ENCODE measurements at regions of chr1 and their contacts with region 1.

Region 1: GRCh38 chr1:67561704-67562113 is 123.3 kb upstream of the GADD45A start:
- DNase-seq: peak; percentile 95
- ATAC-seq: peak; percentile 98
- H3K4me3 Mint-ChIP-seq: no peak overlapping the region
- H3K27ac Mint-ChIP-seq: no peak overlapping the region
- H3K4me1 Mint-ChIP-seq: peaks cover 4% of the 10 kb centered on the region
- H3K27me3 Mint-ChIP-seq: peaks cover 4% of the 10 kb centered on the region
- CTCF ChIP-seq: peak; percentile 88

Region 2: DNA sequence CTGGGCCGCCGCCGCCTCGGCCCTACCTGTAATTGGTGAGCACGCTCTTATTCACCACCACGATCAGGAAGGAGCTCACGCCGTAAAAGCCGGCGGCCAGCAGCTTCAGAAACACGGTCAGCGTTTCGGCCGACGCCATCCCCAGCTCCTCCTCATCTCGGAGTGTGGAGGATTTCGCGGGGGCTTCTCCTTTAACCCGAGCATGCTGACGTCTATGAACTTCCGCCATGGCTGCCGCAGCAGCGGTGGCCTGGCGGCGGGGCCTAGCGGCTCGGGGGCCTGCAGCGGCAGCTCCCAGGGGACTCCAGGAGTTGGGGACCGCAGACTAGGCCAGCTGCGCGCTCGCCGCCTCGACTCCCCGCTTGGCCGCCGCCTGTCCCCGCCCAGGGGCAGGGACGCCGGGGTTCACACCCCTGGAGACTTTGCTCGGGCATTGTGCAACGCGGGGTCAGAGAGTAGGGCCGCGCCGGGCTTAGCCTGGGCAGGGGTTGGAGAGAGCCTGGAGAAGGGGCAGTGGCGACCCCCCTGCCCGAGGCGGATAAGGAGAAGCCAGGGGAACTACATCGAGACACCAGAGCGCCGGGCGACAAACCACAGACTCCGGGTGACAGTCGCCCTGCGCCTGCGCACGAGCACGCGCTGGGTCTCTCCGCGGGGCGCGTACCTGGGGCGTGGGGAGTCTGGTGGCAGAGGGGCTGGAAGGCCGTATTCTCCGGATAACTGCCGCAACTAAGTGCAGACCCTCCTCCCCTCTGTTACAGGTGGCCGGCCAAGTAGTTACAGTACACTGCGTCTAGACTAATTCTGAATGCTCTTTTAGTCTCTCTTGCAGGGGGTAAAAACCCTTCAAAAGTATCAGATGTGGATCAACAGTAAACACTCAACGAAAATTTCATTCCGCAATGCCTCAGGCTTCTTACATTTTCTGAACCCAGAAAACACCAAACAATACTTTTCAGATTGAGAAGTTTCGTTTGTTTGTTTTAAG is 507.6 kb before region 1 on chr1 and contains the start of gene SLC35D1:
- CTCF ChIA-PET with region 1: no interaction called
- POLR2A ChIA-PET with region 1: no interaction called
- intact Hi-C with region 1: no loop called
- DNase-seq: peak; percentile 79
- ATAC-seq: peak; percentile 78
- H3K4me3 Mint-ChIP-seq: peak within 1 kb of the TSS; percentile 84
- H3K27ac Mint-ChIP-seq: peak within 1 kb of the TSS; percentile 94
- H3K4me1 Mint-ChIP-seq: peaks cover 22% of the 10 kb centered on the region
- H3K27me3 Mint-ChIP-seq: no peaks in the 10 kb centered on the region
- CTCF ChIP-seq: no peak
- total RNA-seq, gene SLC35D1: 8.3 to 8.4 TPM

Region 3: DNA sequence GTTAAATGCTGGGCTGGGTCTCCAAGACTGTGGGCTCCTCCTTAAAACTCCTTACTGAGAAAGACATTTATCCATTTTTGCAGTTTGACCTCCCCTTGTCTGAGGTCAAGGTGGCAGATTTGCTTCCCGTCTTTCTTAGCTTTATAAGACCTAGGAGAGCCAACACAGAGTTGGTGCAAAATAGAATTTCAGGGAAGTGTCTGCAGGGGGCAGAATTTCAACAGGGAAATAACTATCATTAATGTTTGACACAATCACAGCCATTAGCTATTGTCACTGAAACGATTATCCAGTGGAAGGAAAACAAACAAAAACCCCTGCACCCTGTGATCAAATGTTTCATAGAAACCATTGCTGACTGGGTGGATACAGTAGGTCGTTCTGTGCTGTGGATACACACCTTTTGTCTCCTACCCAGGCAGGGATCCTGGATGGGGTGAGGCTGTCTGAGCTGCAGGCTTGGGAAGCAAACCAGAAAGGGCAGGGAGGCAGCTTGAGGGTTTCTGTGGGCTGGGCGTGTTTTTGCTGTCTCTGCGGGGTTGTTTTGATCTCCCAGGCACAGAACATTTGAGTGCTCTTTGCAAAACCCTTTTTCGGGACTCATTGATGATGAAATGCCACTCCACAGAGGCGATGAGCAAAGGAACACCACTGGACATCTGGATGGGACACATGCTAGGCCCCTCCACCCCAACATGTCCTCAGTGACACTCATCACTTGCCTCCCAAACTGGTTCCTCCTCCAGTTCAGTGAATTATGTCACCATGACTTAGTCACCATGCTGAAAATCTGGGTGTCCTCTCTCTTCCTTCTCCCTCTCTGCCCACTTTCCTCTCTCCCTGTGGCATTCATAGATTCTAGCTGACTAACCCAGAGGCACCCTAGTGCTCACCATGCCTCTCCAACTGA is 37.3 kb before region 1 on chr1:
- CTCF ChIA-PET with region 1: interaction called, 14 read pairs
- POLR2A ChIA-PET with region 1: no interaction called
- intact Hi-C with region 1: no loop called
- DNase-seq: no peak
- ATAC-seq: no peak
- H3K4me3 Mint-ChIP-seq: no peak overlapping the region
- H3K27ac Mint-ChIP-seq: no peak overlapping the region
- H3K4me1 Mint-ChIP-seq: no peaks in the 10 kb centered on the region
- H3K27me3 Mint-ChIP-seq: peaks cover 6% of the 10 kb centered on the region
- CTCF ChIP-seq: no peak

Region 4: DNA sequence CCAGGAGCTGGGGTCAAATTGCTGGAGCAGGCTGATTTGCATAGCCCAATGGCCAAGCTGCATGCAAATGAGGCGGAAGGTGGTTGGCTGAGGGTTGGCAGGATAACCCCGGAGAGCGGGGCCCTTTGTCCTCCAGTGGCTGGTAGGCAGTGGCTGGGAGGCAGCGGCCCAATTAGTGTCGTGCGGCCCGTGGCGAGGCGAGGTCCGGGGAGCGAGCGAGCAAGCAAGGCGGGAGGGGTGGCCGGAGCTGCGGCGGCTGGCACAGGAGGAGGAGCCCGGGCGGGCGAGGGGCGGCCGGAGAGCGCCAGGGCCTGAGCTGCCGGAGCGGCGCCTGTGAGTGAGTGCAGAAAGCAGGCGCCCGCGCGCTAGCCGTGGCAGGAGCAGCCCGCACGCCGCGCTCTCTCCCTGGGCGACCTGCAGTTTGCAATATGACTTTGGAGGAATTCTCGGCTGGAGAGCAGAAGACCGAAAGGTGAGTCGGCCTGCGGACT is 123.4 kb after region 1 on chr1 and contains the start of gene GADD45A:
- CTCF ChIA-PET with region 1: interaction called, 15 read pairs
- POLR2A ChIA-PET with region 1: no interaction called
- intact Hi-C with region 1: no loop called
- DNase-seq: peak; percentile 97
- ATAC-seq: peak; percentile 85
- H3K4me3 Mint-ChIP-seq: peak within 1 kb of the TSS; percentile 90
- H3K27ac Mint-ChIP-seq: peak within 1 kb of the TSS; percentile 97
- H3K4me1 Mint-ChIP-seq: peaks cover 49% of the 10 kb centered on the region
- H3K27me3 Mint-ChIP-seq: no peaks in the 10 kb centered on the region
- CTCF ChIP-seq: no peak
- total RNA-seq, gene GADD45A: 33.5 to 34.3 TPM

Region 5: DNA sequence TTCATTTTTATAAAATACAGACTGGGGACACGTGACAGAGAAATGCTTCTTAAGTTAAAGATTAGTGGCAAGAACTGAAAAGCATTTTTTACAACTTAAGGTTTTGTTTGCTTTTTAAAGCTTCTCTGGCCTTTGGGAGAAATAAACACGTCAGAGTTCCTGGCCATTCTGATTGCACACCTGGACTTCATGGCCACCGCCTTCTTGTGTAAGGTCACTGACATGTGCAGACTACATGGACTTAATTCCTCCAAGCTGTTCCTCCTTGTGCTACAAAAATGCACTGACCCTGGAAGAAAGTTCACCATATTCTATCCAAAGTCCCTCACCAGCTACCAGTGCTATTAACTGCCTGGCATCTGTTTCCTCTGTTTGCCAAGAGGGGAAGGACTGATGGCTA is 179.4 kb after region 1 on chr1:
- CTCF ChIA-PET with region 1: interaction called, 10 read pairs
- POLR2A ChIA-PET with region 1: no interaction called
- intact Hi-C with region 1: no loop called
- DNase-seq: no peak
- ATAC-seq: no peak
- H3K4me3 Mint-ChIP-seq: no peak overlapping the region
- H3K27ac Mint-ChIP-seq: no peak overlapping the region
- H3K4me1 Mint-ChIP-seq: peaks cover 6% of the 10 kb centered on the region
- H3K27me3 Mint-ChIP-seq: no peaks in the 10 kb centered on the region
- CTCF ChIP-seq: no peak

Region 6: GRCh38 chr1:67766141-67766978 is 204.7 kb after region 1 on chr1:
- CTCF ChIA-PET with region 1: interaction called, 210 read pairs
- POLR2A ChIA-PET with region 1: no interaction called
- intact Hi-C with region 1: no loop called
- DNase-seq: peak; percentile 56
- ATAC-seq: peak; percentile 74
- H3K4me3 Mint-ChIP-seq: no peak overlapping the region
- H3K27ac Mint-ChIP-seq: no peak overlapping the region
- H3K4me1 Mint-ChIP-seq: peaks cover 28% of the 10 kb centered on the region
- H3K27me3 Mint-ChIP-seq: peaks cover 27% of the 10 kb centered on the region
- CTCF ChIP-seq: peak; percentile 66

Measured in activated CD8-positive, alpha-beta T cell treated with anti-CD3 and anti-CD28 coated beads for 36 hours (primary cell).